Mammary epithelial cell (primary cell): ENCODE measurements at regions of chr1 and their contacts with region 1.

Region 1: DNA sequence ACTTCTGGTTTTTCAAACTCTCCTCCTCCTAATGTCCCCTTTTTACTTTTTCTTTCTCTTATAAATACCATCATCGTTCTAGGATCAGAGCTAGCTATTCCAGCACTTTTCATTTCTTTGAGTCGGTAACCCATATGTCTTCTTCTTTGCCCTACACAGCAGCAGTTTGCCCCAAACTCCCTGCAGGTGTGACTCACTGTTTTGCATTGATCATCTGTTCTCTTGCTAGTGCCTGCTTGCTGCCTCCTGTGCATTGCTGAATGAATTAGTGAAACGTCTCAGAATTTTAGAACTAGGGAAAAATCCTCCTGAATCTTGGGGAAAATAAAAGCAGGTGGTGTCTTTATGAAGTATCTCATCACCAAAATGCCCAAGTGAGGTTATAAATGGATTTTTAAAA is 21.7 kb downstream of the KCNK2 start:
- DNase-seq: peak; percentile 19
- H3K4me3 ChIP-seq: no peak overlapping the region
- H3K27ac ChIP-seq: no peak overlapping the region
- H3K4me1 ChIP-seq: no peaks in the 10 kb centered on the region
- H3K27me3 ChIP-seq: no peaks in the 10 kb centered on the region
- CTCF ChIP-seq: no peak

Region 2: GRCh38 chr1:214593158-214593557 is 511.1 kb before region 1 on chr1:
- CTCF ChIA-PET with region 1: no interaction called
- dilution Hi-C with region 1: no loop called
- in situ Hi-C with region 1: no loop called
- intact Hi-C with region 1: no loop called
- DNase-seq: no peak
- H3K4me3 ChIP-seq: no peak overlapping the region
- H3K27ac ChIP-seq: no peak overlapping the region
- H3K4me1 ChIP-seq: no peaks in the 10 kb centered on the region
- H3K27me3 ChIP-seq: no peaks in the 10 kb centered on the region
- CTCF ChIP-seq: no peak

Region 3: DNA sequence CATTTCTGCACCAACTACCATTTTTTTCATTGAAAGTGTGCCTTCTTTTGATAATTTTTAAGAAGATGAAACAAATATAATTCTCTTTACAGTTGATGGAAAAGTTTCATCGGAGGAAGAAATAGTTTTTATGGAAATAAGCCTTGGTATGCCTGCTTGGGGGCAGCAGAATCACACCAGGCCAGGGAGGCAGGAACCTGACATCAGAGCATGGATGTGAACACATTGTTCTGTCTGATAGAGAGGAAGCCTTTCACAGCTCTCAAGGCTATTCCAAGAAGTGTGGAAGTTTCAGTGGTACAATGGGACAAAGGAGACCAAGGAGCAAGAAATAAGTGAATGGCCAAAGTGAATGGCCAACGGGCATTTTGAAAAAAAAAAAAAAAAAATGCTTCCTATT is 183.9 kb before region 1 on chr1:
- CTCF ChIA-PET with region 1: interaction called, 12 read pairs
- dilution Hi-C with region 1: no loop called
- in situ Hi-C with region 1: no loop called
- intact Hi-C with region 1: no loop called
- DNase-seq: no peak
- H3K4me3 ChIP-seq: no peak overlapping the region
- H3K27ac ChIP-seq: no peak overlapping the region
- H3K4me1 ChIP-seq: peaks cover 3% of the 10 kb centered on the region
- H3K27me3 ChIP-seq: no peaks in the 10 kb centered on the region
- CTCF ChIP-seq: no peak

Region 4: DNA sequence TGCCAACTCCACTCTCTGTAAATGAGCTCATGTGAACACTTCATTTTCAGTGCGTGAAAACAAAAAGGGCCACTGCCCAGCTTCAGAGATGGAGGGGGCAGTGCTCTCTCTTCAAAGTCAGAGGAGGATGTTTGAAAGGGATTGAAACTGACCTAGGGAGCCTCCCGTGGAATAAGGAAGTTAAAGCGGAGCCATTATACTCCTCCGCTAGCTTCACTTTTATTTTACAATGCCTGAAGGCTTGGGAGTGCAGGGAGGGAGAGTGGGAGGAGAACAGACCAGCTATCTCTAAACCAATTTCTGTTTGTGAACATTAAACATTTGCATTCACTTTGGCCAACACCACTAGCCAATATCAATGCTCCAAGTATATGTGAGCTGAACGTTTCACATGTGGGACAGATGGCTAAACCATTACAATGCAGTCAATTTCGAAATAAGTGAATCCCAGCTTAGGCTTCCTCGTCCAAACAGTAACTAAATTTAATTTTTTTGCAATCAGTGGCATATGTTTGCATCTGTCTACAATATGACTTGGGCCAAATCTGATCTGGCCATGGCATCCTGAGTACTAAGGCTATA is 1492.1 kb after region 1 on chr1:
- CTCF ChIA-PET with region 1: no interaction called
- dilution Hi-C with region 1: no loop called
- in situ Hi-C with region 1: no loop called
- intact Hi-C with region 1: no loop called
- DNase-seq: no peak
- H3K4me3 ChIP-seq: no peak overlapping the region
- H3K27ac ChIP-seq: no peak overlapping the region
- H3K4me1 ChIP-seq: peaks cover 6% of the 10 kb centered on the region
- H3K27me3 ChIP-seq: no peaks in the 10 kb centered on the region
- CTCF ChIP-seq: no peak